Dendritic cell treated with granulocyte-macrophage colony-stimulating factor and Interleukin-4, amounts not matched to agents 40 ng/mL and 50 ng/mL, for 4 days (primary cell): ENCODE measurements at regions of chr15 and their contacts with region 1.

Region 1: DNA sequence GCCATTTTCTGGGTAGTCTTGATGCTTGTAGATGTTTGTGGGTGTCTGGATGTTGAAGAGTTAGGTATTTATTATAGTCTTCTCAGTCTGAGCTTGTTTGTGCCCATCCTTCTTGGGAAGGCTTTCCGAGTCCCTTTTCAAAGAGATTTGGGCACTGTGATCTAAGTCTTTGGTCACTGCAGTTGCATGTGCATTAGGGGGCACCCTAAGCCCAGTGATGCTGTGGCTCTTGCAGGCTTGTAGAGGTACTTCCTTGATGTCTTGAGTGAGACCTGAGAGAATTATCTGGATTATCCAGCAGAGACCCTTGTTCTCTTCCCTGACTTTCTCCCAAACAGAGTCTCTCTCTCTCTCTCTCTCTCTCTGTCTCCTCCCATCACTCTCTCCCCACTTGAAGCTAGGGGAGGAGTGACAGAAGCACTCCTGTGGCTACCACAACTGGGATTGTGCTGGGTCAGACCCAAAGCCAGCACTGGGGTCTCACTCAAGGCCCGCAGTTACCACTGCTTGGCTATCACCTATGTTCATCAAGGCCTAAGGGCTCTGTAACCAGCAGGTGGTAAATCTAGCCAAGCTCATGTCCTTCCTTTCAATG is 68.5 kb downstream of the TMCO5A start:
- H3K4me3 Mint-ChIP-seq: no peak overlapping the region
- H3K27ac Mint-ChIP-seq: peak overlapping the region; percentile 92
- H3K4me1 Mint-ChIP-seq: peaks cover 49% of the 10 kb centered on the region
- H3K27me3 Mint-ChIP-seq: peaks cover 4% of the 10 kb centered on the region

Region 2: DNA sequence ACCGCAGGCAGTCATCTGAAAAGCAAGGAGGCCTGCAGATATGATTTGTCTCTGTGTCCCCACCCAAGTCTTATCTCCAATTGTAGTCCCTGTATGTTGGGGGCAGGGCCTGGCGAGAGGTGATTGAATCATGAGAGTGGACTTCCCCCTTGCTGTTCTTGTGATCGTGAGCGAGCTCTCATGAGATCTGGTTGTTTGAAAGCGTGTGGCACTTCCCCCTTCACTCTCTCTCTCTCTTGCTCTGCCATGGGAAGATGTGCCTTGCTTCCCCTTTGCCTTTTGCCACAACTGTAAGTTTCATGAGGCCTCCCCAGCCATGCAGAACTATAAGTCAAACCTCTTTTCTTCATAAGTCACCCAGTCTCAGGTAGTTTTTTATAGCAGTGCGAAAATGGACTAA is 14.7 kb after region 1 on chr15:
- intact Hi-C with region 1: loop called (anchors 2 kb)
- H3K4me3 Mint-ChIP-seq: no peak overlapping the region
- H3K27ac Mint-ChIP-seq: peak overlapping the region; percentile 94
- H3K4me1 Mint-ChIP-seq: peaks cover 66% of the 10 kb centered on the region
- H3K27me3 Mint-ChIP-seq: no peaks in the 10 kb centered on the region

Region 3: DNA sequence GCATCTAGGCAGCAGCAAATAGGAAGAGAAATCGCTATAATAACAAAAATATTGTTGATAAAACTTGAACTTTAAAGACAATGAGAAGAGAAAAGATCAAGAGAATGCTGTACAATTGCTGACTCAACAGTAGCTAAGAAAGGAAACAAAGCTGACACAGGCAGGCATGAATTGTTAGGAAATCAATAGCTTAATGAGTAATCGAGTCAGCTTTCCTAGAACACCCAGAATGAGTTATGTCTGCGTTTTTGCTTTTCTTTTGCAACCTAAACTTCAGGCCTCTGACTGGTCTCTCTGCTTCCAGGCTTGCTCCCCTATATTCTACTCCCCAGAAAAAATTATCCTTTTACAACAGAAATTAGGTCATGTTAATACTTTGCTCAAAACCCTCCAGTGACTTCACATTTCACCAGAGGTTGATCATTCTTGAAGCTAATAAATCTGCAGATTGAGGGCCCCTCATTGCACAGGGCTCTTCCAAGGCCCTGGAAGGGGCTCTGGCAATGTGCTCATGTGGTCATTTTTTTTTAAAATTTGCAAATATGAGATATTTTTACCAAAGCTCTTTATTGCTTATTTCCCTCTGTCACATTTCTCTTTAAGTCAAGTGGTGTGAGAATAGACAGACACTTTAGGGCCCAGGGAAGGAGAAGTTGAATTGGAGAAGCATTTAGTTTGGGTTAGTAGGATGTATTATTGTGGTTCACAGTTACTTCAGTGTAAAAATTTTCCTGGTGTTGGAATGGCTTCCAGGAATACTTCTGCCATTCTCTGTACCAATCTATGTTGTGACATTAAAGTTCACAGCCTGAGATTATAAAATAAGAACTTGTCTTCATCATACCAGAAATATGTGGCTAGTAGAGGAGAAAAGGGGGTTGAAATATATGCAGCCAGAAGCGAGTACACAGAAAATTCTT is 47.8 kb after region 1 on chr15:
- intact Hi-C with region 1: loop called (anchors 10 kb)
- H3K4me3 Mint-ChIP-seq: peak overlapping the region; percentile 30
- H3K27ac Mint-ChIP-seq: peak overlapping the region; percentile 99
- H3K4me1 Mint-ChIP-seq: peaks cover 85% of the 10 kb centered on the region
- H3K27me3 Mint-ChIP-seq: no peaks in the 10 kb centered on the region

Region 4: GRCh38 chr15:38072348-38073177 is 69.6 kb after region 1 on chr15:
- intact Hi-C with region 1: loop called (anchors 5 kb)
- H3K4me3 Mint-ChIP-seq: peak overlapping the region; percentile 69
- H3K27ac Mint-ChIP-seq: peak overlapping the region; percentile 99
- H3K4me1 Mint-ChIP-seq: peaks cover 78% of the 10 kb centered on the region
- H3K27me3 Mint-ChIP-seq: peaks cover 21% of the 10 kb centered on the region

Region 5: GRCh38 chr15:38354315-38354929 is 351.4 kb after region 1 on chr15:
- intact Hi-C with region 1: loop called (anchors 2 kb)
- H3K4me3 Mint-ChIP-seq: no peak overlapping the region
- H3K27ac Mint-ChIP-seq: no peak overlapping the region
- H3K4me1 Mint-ChIP-seq: peaks cover 12% of the 10 kb centered on the region
- H3K27me3 Mint-ChIP-seq: no peaks in the 10 kb centered on the region